Ovary (tissue), 10 donors: ENCODE measurements at regions of chr5 and their contacts with region 1.

Region 1: GRCh38 chr5:91101600-91102379 is 281.3 kb downstream of the ARRDC3 start:
- DNase-seq: peak; percentile 70 to 83 (median 72)
- H3K4me3 ChIP-seq: no peak overlapping the region
- H3K27ac ChIP-seq: no peak overlapping the region
- H3K4me1 ChIP-seq: no peaks in the 10 kb centered on the region
- H3K27me3 ChIP-seq: no peaks in the 10 kb centered on the region
- CTCF ChIP-seq: peak; percentile 59 to 85 (median 83)
- EP300 ChIP-seq: no peak
- POLR2A ChIP-seq: no peak

Region 2: DNA sequence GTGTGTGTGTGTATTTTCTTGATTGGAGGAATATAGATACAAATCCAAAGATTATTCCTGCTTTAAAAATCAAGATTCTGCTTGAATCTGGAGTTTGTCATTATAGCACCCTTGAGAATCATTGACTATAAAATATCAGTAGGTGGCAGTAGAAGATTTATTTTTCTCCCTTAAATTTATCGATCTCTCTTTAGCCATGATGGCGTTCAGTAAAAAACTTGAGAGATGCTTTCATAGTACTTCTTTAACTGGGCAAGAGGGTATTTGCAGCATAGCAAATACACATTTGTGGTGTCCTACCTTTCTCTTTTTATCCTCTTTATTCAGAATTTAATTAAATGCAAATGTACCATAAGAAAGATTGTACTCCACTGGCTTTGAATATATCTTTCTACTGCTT is 235.5 kb before region 1 on chr5:
- intact Hi-C with region 1: loop called in 1 of 4 experiments (anchors 10 kb)
- DNase-seq: no peak
- H3K4me3 ChIP-seq: no peak overlapping the region
- H3K27ac ChIP-seq: no peak overlapping the region
- H3K4me1 ChIP-seq: peaks cover 2% of the 10 kb centered on the region
- H3K27me3 ChIP-seq: no peaks in the 10 kb centered on the region
- CTCF ChIP-seq: peak; percentile 27 to 46 (median 42)
- EP300 ChIP-seq: no peak
- POLR2A ChIP-seq: no peak

Region 3: GRCh38 chr5:90932052-90932699 is 169.6 kb before region 1 on chr5:
- intact Hi-C with region 1: loop called in 2 of 4 experiments (anchors 5 to 10 kb)
- DNase-seq: peak in 4 of 5 donors; percentile 39 to 70 (median 46)
- H3K4me3 ChIP-seq: no peak overlapping the region
- H3K27ac ChIP-seq: no peak overlapping the region
- H3K4me1 ChIP-seq: peaks cover 6% of the 10 kb centered on the region
- H3K27me3 ChIP-seq: no peaks in the 10 kb centered on the region
- CTCF ChIP-seq: peak; percentile 34 to 67 (median 53)
- EP300 ChIP-seq: no peak
- POLR2A ChIP-seq: no peak